OCI-LY7 (cell line): ENCODE measurements at regions of chr5 and their contacts with region 1.

Region 1: GRCh38 chr5:107835096-107835495 is 164.4 kb upstream of the EFNA5 start:
- DNase-seq: no peak
- H3K4me3 ChIP-seq: no peak overlapping the region
- H3K27ac ChIP-seq: no peak overlapping the region
- H3K4me1 ChIP-seq: no peaks in the 10 kb centered on the region
- CTCF ChIP-seq: no peak

Region 2: GRCh38 chr5:107724642-107725041 is 110.5 kb before region 1 on chr5:
- CTCF ChIA-PET with region 1: no interaction called
- POLR2A ChIA-PET with region 1: no interaction called
- intact Hi-C with region 1: no loop called
- DNase-seq: no peak
- H3K4me3 ChIP-seq: no peak overlapping the region
- H3K27ac ChIP-seq: no peak overlapping the region
- H3K4me1 ChIP-seq: no peaks in the 10 kb centered on the region
- CTCF ChIP-seq: no peak

Region 3: DNA sequence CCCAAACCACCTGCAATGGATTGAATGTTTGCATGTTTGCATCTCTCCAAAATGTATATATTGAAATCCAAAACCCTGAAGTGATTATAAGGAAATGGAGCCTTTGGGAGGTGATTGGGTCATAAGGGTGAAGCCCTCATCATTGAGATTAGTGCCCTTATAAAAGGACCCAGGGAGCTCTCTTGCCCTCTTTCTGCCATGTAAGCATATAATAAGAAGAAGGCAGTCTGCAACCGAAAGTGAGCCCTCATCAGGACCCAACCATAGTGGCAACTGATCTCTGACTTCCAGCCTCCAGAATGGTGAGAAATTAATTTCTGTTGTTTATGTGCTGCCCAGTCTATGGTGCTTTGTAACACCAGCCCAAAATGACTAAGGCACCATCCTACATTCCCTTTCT is 48.7 kb before region 1 on chr5:
- CTCF ChIA-PET with region 1: no interaction called
- POLR2A ChIA-PET with region 1: no interaction called
- intact Hi-C with region 1: loop called (anchors 5 kb)
- DNase-seq: no peak
- H3K4me3 ChIP-seq: no peak overlapping the region
- H3K27ac ChIP-seq: no peak overlapping the region
- H3K4me1 ChIP-seq: no peaks in the 10 kb centered on the region
- CTCF ChIP-seq: no peak